ENCODE measurements at regions of chr21 and their contacts with region 1.

Region 1: GRCh38 chr21:36966066-36966820 is at the start of gene HLCS:
- DNase-seq: peak; percentile 78
- ATAC-seq: peak; percentile 89
- H3K4me3 Mint-ChIP-seq: peak within 1 kb of the TSS; percentile 88
- H3K27ac Mint-ChIP-seq: peak within 1 kb of the TSS; percentile 93
- H3K4me1 Mint-ChIP-seq: peaks cover 22% of the 10 kb centered on the region
- H3K27me3 Mint-ChIP-seq: no peaks in the 10 kb centered on the region
- CTCF ChIP-seq: no peak
- total RNA-seq, gene HLCS: 12.5 to 15.5 TPM

Region 2: GRCh38 chr21:36976882-36977651 is 10.8 kb after region 1 on chr21:
- CTCF ChIA-PET with region 1: interaction called, 10 read pairs
- POLR2A ChIA-PET with region 1: interaction called, 4 read pairs
- intact Hi-C with region 1: no loop called
- DNase-seq: peak; percentile 84
- ATAC-seq: peak; percentile 93
- H3K4me3 Mint-ChIP-seq: no peak overlapping the region
- H3K27ac Mint-ChIP-seq: peak overlapping the region; percentile 69
- H3K4me1 Mint-ChIP-seq: peaks cover 32% of the 10 kb centered on the region
- H3K27me3 Mint-ChIP-seq: peaks cover 1% of the 10 kb centered on the region
- CTCF ChIP-seq: peak; percentile 77

Measured in activated CD8-positive, alpha-beta T cell treated with anti-CD3 and anti-CD28 coated beads for 36 hours (primary cell).